GM12878 (cell line): ENCODE measurements at regions of chr4 and their contacts with region 1.

Region 1: DNA sequence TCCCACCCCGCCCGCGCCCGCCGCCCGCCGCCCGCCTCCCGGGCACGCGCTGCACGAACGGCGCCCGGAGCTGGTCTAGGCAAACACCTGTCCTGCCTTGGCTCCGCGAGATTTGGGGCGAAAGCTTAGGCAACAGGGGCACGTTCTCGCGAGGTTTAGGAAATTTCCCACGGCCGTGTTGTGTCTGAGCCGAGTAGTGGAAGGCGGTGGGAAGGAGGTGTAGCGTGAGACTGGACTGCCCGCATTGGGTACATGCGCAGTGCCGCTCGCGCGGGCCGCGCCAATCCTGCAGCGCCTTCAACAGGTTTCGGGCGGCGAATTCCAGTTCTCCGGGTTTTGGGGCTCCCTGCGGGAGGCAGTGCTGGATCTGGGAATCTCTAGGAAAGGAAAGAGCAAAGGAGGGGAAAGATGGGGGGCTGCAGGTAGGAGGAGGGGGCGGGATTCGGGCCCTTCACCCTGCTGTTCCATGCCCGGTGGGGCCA is 1.3 kb upstream of the RBPJ start:
- DNase-seq: peak; percentile 99
- ATAC-seq: peak; percentile 81
- H3K4me3 ChIP-seq: peak overlapping the region; percentile 94
- H3K27ac ChIP-seq: peak overlapping the region; percentile 97
- H3K4me1 ChIP-seq: no peaks in the 10 kb centered on the region
- H3K27me3 ChIP-seq: no peaks in the 10 kb centered on the region
- CTCF ChIP-seq: peak in 2 of 3 experiments; percentile 23 to 71; a peak in 3 of 6 replicates
- EP300 ChIP-seq: no peak
- POLR2A ChIP-seq: peak; percentile 74
- RAD21 ChIP-seq: no peak

Region 2: DNA sequence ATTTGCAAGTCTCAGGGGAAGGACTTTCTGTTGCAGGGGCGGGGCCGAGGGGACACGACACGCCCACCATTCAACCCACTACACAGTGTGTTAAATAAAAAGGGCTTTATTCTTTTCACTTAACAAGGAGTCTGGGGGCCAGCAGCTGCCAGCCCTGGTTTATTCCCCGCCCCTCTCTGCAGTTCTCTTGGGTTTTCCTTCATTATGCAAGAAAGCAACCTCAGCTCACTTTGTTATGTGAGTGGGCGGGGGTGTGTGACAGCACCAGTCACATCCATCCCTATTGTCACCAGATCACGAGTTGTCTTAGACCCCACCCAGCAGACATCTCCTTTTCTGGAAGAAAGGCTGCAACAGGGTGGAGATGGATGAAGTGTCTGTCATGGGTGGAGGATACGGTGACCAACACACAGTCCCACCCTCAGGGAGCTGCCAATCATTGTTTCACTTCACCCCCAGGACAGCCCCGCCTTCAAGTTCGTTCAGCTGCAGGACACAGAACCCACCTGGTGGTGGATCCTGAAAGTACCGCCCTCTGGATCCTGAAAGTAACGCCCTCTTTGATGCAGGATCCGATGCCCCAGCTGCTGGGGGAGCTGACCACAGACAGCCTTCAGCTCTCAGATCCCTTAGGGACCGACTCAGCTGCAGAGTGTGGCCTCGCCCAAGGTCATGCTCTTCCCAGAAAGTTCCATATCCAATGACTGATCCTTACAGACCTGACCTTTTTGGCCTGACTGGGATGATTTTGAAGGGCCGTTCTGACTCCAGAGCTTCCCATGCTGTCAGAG is 325.9 kb before region 1 on chr4:
- CTCF ChIA-PET with region 1: no interaction called
- POLR2A ChIA-PET with region 1: interaction called, 11 read pairs
- RAD21 ChIA-PET with region 1: no interaction called
- SMC1A ChIA-PET with region 1: interaction called, 4 read pairs
- in situ Hi-C with region 1: no loop called
- intact Hi-C with region 1: no loop called
- DNase-seq: no peak
- ATAC-seq: peak; percentile 87
- H3K4me3 ChIP-seq: no peak overlapping the region
- H3K27ac ChIP-seq: no peak overlapping the region
- H3K4me1 ChIP-seq: 0 out of 2 replicates have a peak, but pooled peaks cover 5% of the 10 kb centered on the region
- H3K27me3 ChIP-seq: no peaks in the 10 kb centered on the region
- CTCF ChIP-seq: peak; percentile 28 to 41 (median 35); a peak in 5 of 6 replicates
- EP300 ChIP-seq: no peak
- POLR2A ChIP-seq: no peak
- RAD21 ChIP-seq: peak; percentile 52

Region 3: GRCh38 chr4:26048378-26048882 is 271.1 kb before region 1 on chr4:
- CTCF ChIA-PET with region 1: no interaction called
- POLR2A ChIA-PET with region 1: no interaction called
- RAD21 ChIA-PET with region 1: no interaction called
- SMC1A ChIA-PET with region 1: no interaction called
- in situ Hi-C with region 1: no loop called
- intact Hi-C with region 1: no loop called
- DNase-seq: no peak
- ATAC-seq: no peak
- H3K4me3 ChIP-seq: no peak overlapping the region
- H3K27ac ChIP-seq: no peak overlapping the region
- H3K4me1 ChIP-seq: peaks cover 13% of the 10 kb centered on the region; the same call in 1 of the 2 replicates
- H3K27me3 ChIP-seq: peaks cover 0 to 2% of the 10 kb centered on the region in 2 experiments; a peak in 2 of 4 replicates
- CTCF ChIP-seq: no peak
- EP300 ChIP-seq: no peak
- POLR2A ChIP-seq: no peak
- RAD21 ChIP-seq: no peak

Region 4: GRCh38 chr4:26069218-26069617 is 250.3 kb before region 1 on chr4:
- CTCF ChIA-PET with region 1: interaction called, 29 read pairs
- POLR2A ChIA-PET with region 1: interaction called, 7 read pairs
- RAD21 ChIA-PET with region 1: interaction called, 37 read pairs
- SMC1A ChIA-PET with region 1: interaction called, 24 read pairs
- in situ Hi-C with region 1: loop called (anchors 5 kb)
- intact Hi-C with region 1: no loop called
- DNase-seq: no peak
- ATAC-seq: peak; percentile 89
- H3K4me3 ChIP-seq: no peak overlapping the region
- H3K27ac ChIP-seq: no peak overlapping the region
- H3K4me1 ChIP-seq: peaks cover 4% of the 10 kb centered on the region
- H3K27me3 ChIP-seq: no peaks in the 10 kb centered on the region; a peak in 1 of 4 replicates
- CTCF ChIP-seq: peak; percentile 52 to 64 (median 56); a peak in 5 of 6 replicates
- EP300 ChIP-seq: no peak
- POLR2A ChIP-seq: no peak
- RAD21 ChIP-seq: peak; percentile 75

Region 5: GRCh38 chr4:26088433-26088928 is 231.0 kb before region 1 on chr4:
- CTCF ChIA-PET with region 1: interaction called, 127 read pairs
- POLR2A ChIA-PET with region 1: interaction called, 4 read pairs
- RAD21 ChIA-PET with region 1: interaction called, 76 read pairs
- SMC1A ChIA-PET with region 1: interaction called, 97 read pairs
- in situ Hi-C with region 1: no loop called
- intact Hi-C with region 1: no loop called
- DNase-seq: peak; percentile 80
- ATAC-seq: peak; percentile 92
- H3K4me3 ChIP-seq: no peak overlapping the region
- H3K27ac ChIP-seq: peak overlapping the region; percentile 29; the same call in 1 of the 2 replicates
- H3K4me1 ChIP-seq: peaks cover 30% of the 10 kb centered on the region
- H3K27me3 ChIP-seq: no peaks in the 10 kb centered on the region
- CTCF ChIP-seq: no peak
- EP300 ChIP-seq: peak; percentile 23 to 72; a peak in 2 of 4 replicates
- POLR2A ChIP-seq: no peak
- RAD21 ChIP-seq: no peak

Region 6: DNA sequence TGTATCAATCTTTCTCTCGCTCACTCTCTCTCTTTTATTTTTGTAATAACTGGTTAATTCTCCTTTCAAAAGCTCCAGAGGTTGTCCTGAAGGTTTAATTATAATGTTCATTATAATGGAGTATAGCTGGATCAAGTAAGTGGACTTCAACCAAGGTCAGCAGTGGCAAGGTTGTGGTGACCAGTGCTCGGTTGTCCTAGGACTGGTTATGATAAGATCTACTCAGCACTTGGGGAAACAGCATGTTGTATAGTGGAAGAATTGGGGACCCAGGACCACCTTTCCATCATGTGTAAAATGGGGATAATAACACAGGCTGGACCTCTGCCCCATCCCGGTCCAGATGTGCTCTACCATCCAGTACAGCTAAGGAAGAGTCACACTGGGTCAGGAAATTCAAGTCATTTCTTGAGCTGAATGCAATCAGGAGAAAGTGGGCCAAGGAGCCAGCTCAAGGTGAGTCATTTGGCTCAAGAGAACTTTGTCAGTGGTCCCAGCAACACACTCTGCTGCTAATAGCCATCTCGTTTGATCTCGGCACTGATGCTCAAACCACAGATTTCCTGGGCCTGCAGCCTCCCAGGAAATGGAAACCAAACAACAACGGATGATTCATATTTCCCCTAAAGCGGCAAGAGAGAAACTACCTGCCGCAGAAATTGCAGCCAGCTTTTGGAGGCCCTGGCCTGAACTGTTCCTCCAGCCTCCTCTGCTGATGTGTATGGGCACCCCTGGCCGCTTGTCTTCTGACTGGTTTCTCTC is 122.3 kb before region 1 on chr4:
- CTCF ChIA-PET with region 1: interaction called, 4 read pairs
- POLR2A ChIA-PET with region 1: interaction called, 9 read pairs
- RAD21 ChIA-PET with region 1: interaction called, 16 read pairs
- SMC1A ChIA-PET with region 1: interaction called, 7 read pairs
- in situ Hi-C with region 1: no loop called
- intact Hi-C with region 1: loop called (anchors 1 kb)
- DNase-seq: peak; percentile 89
- ATAC-seq: peak; percentile 84
- H3K4me3 ChIP-seq: no peak overlapping the region
- H3K27ac ChIP-seq: peak overlapping the region; percentile 14; the same call in 1 of the 2 replicates
- H3K4me1 ChIP-seq: peaks cover 35% of the 10 kb centered on the region
- H3K27me3 ChIP-seq: no peaks in the 10 kb centered on the region
- CTCF ChIP-seq: no peak
- EP300 ChIP-seq: peak; percentile 49 to 50; a peak in 2 of 4 replicates
- POLR2A ChIP-seq: no peak
- RAD21 ChIP-seq: peak; percentile 37

Region 7: GRCh38 chr4:26404743-26405206 is 85.3 kb after region 1 on chr4:
- CTCF ChIA-PET with region 1: interaction called, 474 read pairs
- POLR2A ChIA-PET with region 1: interaction called, 3 read pairs
- RAD21 ChIA-PET with region 1: interaction called, 12 read pairs
- SMC1A ChIA-PET with region 1: interaction called, 21 read pairs
- in situ Hi-C with region 1: no loop called
- intact Hi-C with region 1: no loop called
- DNase-seq: no peak
- ATAC-seq: no peak
- H3K4me3 ChIP-seq: no peak overlapping the region
- H3K27ac ChIP-seq: no peak overlapping the region
- H3K4me1 ChIP-seq: peaks cover 10% of the 10 kb centered on the region
- H3K27me3 ChIP-seq: no peaks in the 10 kb centered on the region
- CTCF ChIP-seq: no peak
- EP300 ChIP-seq: no peak
- POLR2A ChIP-seq: no peak
- RAD21 ChIP-seq: no peak

Region 8: GRCh38 chr4:26719954-26720552 is 400.5 kb after region 1 on chr4:
- CTCF ChIA-PET with region 1: no interaction called
- POLR2A ChIA-PET with region 1: no interaction called
- RAD21 ChIA-PET with region 1: no interaction called
- SMC1A ChIA-PET with region 1: no interaction called
- in situ Hi-C with region 1: no loop called
- intact Hi-C with region 1: no loop called
- DNase-seq: no peak
- ATAC-seq: no peak
- H3K4me3 ChIP-seq: no peak overlapping the region
- H3K27ac ChIP-seq: no peak overlapping the region
- H3K4me1 ChIP-seq: no peaks in the 10 kb centered on the region
- H3K27me3 ChIP-seq: no peaks in the 10 kb centered on the region
- CTCF ChIP-seq: peak in 2 of 3 experiments; percentile 34 to 40; a peak in 3 of 6 replicates
- EP300 ChIP-seq: no peak
- POLR2A ChIP-seq: no peak
- RAD21 ChIP-seq: peak; percentile 78